Activated CD4-positive, alpha-beta T cell treated with anti-CD3 and anti-CD28 coated beads, Interleukin-2, amount 10 ng/mL, durations not matched to agents 24 days and 14 days (primary cell): ENCODE measurements at regions of chr3 and their contacts with region 1.

Region 1: GRCh38 chr3:193960487-193961274 is 175.3 kb upstream of the HES1 start:
- DNase-seq: no peak
- H3K4me3 Mint-ChIP-seq: no peak overlapping the region
- H3K27ac Mint-ChIP-seq: no peak overlapping the region
- H3K4me1 Mint-ChIP-seq: peaks cover 31% of the 10 kb centered on the region
- H3K27me3 Mint-ChIP-seq: peaks cover 41% of the 10 kb centered on the region

Region 2: DNA sequence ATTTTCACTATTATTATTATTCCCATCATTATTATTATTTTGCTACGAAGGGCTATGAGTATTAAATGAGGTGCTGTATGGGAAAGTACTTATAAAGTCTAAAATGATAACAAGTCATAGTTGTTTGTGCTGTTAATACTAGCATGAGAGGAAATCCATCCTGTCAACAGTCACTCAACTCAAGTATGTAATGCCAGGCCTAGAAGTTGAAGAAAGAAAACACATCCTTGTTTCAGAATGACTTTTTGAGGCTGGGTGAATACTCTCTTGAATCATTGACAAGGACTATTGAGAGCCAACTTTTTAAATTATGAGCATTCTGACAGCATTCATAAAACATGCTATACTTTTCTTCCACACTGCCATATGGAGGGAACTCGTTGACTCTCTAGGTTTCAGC is 521.3 kb before region 1 on chr3:
- intact Hi-C with region 1: no loop called
- DNase-seq: no peak
- H3K4me3 Mint-ChIP-seq: no peak overlapping the region
- H3K27ac Mint-ChIP-seq: no peak overlapping the region
- H3K4me1 Mint-ChIP-seq: no peaks in the 10 kb centered on the region
- H3K27me3 Mint-ChIP-seq: no peaks in the 10 kb centered on the region

Region 3: DNA sequence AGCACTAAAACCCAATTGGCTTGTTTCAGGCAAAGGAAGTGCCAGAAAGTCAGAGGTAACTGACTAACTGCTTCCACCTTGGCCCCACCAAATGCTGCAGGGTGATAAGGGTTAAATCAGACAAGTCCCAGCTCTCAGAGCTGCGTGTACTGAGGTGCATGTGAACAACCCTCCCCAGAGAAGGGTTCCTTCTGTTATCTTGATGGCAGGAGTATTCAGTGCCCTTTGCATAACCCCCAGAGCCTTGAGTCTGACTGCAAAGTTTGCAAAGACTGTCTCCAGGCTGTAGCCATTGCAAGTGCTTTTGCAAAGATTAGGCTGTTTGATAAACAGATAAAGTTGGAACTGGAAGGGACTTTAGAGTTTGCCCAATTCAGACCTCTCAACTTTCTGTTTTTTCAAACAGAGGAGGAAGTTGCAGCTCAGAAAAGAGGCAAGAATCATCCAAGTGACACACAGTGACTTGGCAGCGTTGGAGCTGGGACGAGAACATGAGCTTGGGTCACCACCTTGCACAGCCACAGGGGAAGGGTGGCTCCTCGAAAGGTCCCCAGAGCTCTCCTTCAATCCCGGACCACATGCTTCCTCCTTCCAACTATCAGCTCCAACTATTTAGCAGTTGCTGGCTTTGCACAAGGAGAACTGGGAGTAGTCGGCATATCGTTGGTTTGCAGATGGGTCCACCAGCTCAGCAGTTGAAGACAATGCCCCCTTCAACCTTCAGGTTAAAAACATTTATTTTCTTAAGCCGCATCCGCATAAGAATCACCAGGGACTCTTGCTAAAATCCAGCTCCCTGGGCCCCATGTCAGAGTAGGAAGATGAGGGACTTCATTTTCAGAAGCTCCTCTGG is 49.6 kb before region 1 on chr3:
- intact Hi-C with region 1: no loop called
- DNase-seq: no peak
- H3K4me3 Mint-ChIP-seq: no peak overlapping the region
- H3K27ac Mint-ChIP-seq: no peak overlapping the region
- H3K4me1 Mint-ChIP-seq: peaks cover 9% of the 10 kb centered on the region
- H3K27me3 Mint-ChIP-seq: peaks cover 5% of the 10 kb centered on the region

Region 4: DNA sequence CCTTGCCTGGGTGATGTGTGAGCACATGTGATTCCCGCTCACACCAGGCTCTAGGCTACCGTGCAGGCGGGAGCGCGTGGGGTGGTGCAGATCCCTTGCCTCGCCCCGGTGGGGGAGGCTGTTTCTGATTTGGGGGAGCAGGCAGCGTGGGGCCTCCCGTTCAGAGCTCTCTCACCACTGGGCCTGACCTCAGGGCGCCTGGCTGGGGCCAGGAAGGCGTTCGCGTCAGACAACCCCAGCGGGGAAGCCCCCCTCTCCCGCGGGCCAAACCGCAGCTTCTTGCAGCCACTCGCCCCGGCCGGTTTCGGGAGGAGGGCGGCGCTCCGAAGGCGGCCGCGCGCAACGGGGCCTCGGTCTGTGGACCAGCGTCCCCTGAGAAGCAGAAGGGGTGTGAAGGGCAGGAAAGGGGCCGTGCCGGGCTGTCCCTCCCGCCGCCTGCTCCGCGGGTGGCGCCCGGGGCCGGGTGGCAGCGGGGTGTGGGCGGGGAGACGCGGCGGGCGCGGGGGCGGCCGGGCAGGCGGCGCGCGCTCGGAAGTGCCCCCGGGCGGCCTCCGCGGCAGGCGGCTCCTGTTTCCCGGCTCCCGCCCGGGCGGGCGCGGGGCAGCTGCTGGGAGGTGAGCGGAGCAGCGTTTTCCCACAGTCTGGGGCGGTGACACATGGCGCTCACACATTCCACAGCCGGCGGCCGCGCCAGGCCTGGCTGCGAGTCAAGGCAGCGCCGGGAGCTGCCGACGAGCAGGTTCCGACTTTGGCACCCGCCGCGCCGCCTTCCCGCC is 110.1 kb after region 1 on chr3:
- intact Hi-C with region 1: loop called (anchors 5 kb)
- DNase-seq: peak; percentile 88
- H3K4me3 Mint-ChIP-seq: peak overlapping the region; percentile 63
- H3K27ac Mint-ChIP-seq: no peak overlapping the region
- H3K4me1 Mint-ChIP-seq: peaks cover 15% of the 10 kb centered on the region
- H3K27me3 Mint-ChIP-seq: peaks cover 72% of the 10 kb centered on the region

Region 5: GRCh38 chr3:194141415-194142155 is 180.9 kb after region 1 on chr3:
- intact Hi-C with region 1: loop called (anchors 2 kb)
- DNase-seq: peak; percentile 87
- H3K4me3 Mint-ChIP-seq: peak overlapping the region; percentile 52
- H3K27ac Mint-ChIP-seq: peak overlapping the region; percentile 85
- H3K4me1 Mint-ChIP-seq: peaks cover 19% of the 10 kb centered on the region
- H3K27me3 Mint-ChIP-seq: peaks cover 51% of the 10 kb centered on the region

Region 6: DNA sequence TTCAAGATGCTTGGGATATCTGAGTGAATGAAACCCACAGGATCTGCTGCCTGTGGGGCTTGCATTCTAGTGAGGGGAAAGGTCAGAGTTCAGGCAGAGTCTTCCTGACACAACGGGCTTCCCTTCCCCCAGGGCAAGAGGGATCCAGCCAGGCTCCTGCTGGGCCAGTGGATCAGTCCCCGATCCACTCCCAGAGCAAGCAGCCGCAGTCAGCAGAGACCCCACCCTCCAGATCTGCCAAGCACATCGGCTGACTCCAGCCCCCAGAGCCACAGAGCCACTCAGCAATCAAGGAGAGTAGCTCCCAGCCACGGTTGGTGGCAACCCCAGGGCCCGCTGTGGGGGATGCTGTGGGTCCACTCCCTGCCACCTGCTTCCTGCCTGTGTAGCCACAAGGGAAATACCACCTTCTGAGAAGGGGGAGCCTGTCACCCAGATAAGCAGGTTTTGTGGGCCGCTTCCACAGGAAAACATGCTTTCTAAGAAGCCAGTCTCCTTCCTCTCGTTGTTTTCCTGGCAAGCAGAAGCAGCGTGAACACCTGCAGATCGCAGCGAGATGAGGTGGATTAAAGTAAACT is 345.5 kb after region 1 on chr3:
- intact Hi-C with region 1: loop called (anchors 5 kb)
- DNase-seq: peak; percentile 90
- H3K4me3 Mint-ChIP-seq: peak overlapping the region; percentile 74
- H3K27ac Mint-ChIP-seq: peak overlapping the region; percentile 84
- H3K4me1 Mint-ChIP-seq: peaks cover 50% of the 10 kb centered on the region
- H3K27me3 Mint-ChIP-seq: no peaks in the 10 kb centered on the region